ENCODE measurements at regions of chr19 and their contacts with region 1.

Region 1: GRCh38 chr19:36169084-36169760 is 17.0 kb upstream of the COX7A1 start:
- DNase-seq: no peak
- H3K4me3 Mint-ChIP-seq: no peak overlapping the region
- H3K27ac Mint-ChIP-seq: no peak overlapping the region
- H3K4me1 Mint-ChIP-seq: peaks cover 4% of the 10 kb centered on the region
- H3K27me3 Mint-ChIP-seq: no peaks in the 10 kb centered on the region

Region 2: GRCh38 chr19:35882114-35882832 is 286.9 kb before region 1 on chr19:
- CTCF ChIA-PET with region 1: no interaction called
- intact Hi-C with region 1: loop called (anchors 10 kb)
- DNase-seq: peak; percentile 58
- H3K4me3 Mint-ChIP-seq: no peak overlapping the region
- H3K27ac Mint-ChIP-seq: no peak overlapping the region
- H3K4me1 Mint-ChIP-seq: peaks cover 9% of the 10 kb centered on the region
- H3K27me3 Mint-ChIP-seq: peaks cover 21% of the 10 kb centered on the region

Region 3: DNA sequence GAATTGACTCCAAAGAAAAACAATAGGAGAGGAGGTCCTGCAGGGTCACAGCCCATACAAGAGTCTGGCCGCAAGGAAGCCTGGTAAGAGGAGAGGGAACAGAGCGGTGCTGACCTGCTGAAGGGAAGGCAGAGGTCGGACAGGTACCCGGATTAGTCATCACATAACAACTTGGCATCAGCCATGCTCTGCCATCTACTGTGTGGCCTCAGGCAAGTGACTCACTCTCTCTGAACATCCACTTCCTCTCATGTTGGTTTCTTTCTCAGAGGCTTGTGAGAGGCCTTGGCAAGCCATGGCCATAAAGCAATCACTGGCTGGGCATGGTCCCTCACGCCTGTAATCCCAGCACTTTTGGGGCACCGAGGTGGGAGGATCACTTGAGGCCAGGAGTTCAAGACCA is 36.7 kb before region 1 on chr19:
- CTCF ChIA-PET with region 1: interaction called, 71 read pairs
- intact Hi-C with region 1: loop called (anchors 1 kb)
- DNase-seq: peak; percentile 61
- H3K4me3 Mint-ChIP-seq: no peak overlapping the region
- H3K27ac Mint-ChIP-seq: peak overlapping the region; percentile 18
- H3K4me1 Mint-ChIP-seq: peaks cover 32% of the 10 kb centered on the region
- H3K27me3 Mint-ChIP-seq: no peaks in the 10 kb centered on the region

Region 4: DNA sequence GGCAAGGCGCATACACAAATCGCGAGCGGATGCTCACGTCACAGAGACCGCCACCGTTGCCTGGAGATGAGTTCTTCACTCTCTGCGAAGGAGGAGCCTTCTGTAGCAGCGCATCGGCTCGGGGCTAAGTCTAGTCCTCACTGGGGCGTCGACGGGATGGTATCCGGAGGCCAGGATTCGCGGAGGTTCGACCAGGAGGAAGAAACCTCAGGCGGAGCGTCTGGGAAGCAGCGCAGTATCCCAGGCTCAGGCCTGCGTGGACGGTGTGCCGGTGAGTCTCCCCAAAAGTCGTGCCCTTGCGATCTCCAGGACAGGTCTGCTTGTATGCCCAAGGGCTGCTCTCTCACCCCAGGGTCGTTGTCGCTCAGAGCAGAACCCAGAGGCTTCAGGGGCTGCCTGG is 86.1 kb after region 1 on chr19:
- CTCF ChIA-PET with region 1: no interaction called
- intact Hi-C with region 1: no loop called
- DNase-seq: no peak
- H3K4me3 Mint-ChIP-seq: no peak overlapping the region
- H3K27ac Mint-ChIP-seq: no peak overlapping the region
- H3K4me1 Mint-ChIP-seq: no peaks in the 10 kb centered on the region
- H3K27me3 Mint-ChIP-seq: no peaks in the 10 kb centered on the region

Measured in activated naive CD4-positive, alpha-beta T cell treated with anti-CD3 and anti-CD28 coated beads for 36 hours (primary cell).